Activated CD4-positive, alpha-beta T cell treated with anti-CD3 and anti-CD28 coated beads, Interleukin-2, amount 10 ng/mL, durations not matched to agents 24 days and 14 days (primary cell): ENCODE measurements at regions of chr16 and their contacts with region 1.

Region 1: DNA sequence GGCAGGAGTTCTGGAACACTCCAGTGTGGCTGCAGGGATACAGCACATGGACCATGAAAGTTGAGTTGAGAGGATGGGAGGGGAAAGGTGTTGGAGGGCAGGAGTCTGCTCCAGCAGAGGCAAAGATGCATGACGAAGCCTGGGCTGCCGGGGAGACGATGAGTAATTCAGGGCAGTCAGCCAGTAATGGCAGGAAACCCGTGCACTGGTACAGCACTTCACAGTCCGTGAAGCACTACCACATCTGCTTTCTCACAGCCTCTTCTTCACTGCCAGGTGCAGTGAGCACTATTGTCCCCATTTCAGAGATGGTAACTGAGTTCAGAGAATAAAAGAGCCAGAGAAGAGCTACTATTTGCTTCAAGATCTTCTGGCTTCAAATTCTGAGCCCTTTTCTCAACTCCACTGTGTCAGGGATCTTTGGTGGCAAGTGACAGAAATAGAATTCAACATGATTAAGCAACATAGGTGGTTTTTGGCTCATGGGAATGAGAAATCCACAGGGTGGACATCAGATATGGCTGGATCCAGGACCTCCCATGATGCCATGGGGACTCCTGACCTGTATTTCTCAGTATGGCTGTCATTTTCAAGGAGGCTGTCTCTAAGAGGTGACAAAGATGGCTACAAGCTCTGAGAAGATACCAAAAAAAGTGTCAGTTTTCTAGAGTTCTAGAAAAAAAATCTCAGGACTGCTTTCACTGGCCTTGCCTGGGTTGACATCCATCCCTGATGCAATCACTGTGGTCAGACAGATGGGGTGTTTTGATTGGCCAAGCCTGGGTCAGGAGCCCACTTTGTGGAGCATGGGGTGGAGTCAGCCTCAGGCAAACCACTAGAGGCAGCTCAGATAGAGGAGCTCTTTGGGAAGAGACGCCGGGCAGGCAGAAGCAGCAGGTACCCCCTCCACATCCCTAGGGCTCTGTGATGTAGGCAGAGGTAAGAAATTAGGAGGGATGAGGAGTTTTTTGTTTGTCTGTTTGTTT is 24.7 kb downstream of the IL21R start:
- DNase-seq: peak; percentile 90
- H3K4me3 Mint-ChIP-seq: peak overlapping the region; percentile 24
- H3K27ac Mint-ChIP-seq: peak overlapping the region; percentile 80
- H3K4me1 Mint-ChIP-seq: peaks cover 55% of the 10 kb centered on the region
- H3K27me3 Mint-ChIP-seq: no peaks in the 10 kb centered on the region

Region 2: GRCh38 chr16:27374804-27375425 is 51.8 kb before region 1 on chr16:
- intact Hi-C with region 1: no loop called
- DNase-seq: peak; percentile 77
- H3K4me3 Mint-ChIP-seq: no peak overlapping the region
- H3K27ac Mint-ChIP-seq: no peak overlapping the region
- H3K4me1 Mint-ChIP-seq: peaks cover 28% of the 10 kb centered on the region
- H3K27me3 Mint-ChIP-seq: no peaks in the 10 kb centered on the region

Region 3: GRCh38 chr16:27387724-27388123 is 39.0 kb before region 1 on chr16:
- intact Hi-C with region 1: no loop called
- DNase-seq: peak; percentile 58
- H3K4me3 Mint-ChIP-seq: no peak overlapping the region
- H3K27ac Mint-ChIP-seq: peak overlapping the region; percentile 76
- H3K4me1 Mint-ChIP-seq: peaks cover 14% of the 10 kb centered on the region
- H3K27me3 Mint-ChIP-seq: no peaks in the 10 kb centered on the region

Region 4: DNA sequence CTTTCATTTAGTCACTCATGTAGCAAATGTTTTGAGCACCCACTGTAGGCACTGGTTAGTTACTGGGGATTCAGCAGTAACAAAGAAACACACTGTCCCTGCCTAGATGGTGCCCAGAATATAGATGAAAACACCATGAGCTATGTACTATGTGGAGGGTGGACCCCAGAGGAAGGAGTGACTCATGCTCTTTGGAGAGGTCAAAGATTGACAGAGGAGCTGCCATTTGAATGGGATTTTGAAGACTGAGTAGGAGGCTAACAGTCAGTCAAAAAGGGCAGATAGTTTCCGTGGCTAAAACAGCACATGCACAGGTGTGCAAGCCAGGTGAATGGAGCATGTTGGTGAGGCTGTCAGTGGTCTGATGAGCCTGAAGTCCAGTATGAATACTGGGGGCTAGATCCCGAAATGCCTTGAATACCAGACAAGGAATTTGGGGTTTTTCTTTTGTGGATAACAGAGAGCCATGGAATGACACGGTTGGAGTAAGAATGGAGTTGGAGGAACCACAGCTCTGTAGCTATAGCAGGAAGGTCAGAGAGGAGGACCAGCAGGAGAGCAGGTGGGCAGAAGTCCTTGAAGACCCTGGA is 18.6 kb before region 1 on chr16:
- intact Hi-C with region 1: loop called (anchors 1 kb)
- DNase-seq: peak; percentile 79
- H3K4me3 Mint-ChIP-seq: peak overlapping the region; percentile 100
- H3K27ac Mint-ChIP-seq: peak overlapping the region; percentile 98
- H3K4me1 Mint-ChIP-seq: peaks cover 62% of the 10 kb centered on the region
- H3K27me3 Mint-ChIP-seq: no peaks in the 10 kb centered on the region

Region 5: DNA sequence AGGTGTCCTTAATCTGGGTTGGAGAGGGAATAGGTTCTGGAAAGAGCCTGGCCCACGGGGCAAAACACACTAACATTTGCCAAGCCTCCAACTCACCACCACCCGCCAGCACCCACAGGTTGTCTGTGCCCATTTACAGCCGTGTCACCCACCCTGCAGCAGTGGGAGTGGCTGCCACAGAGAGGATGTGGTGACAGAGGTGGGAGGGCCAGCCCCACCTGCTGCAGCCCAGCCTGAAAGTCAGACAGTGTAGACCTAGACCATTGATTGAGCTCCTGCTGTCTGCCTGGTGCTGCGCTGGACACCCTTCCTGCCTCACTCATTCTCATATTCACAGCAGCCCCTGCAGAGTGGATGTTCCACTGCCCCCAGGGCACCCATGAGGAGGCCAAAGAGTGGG is 20.0 kb after region 1 on chr16:
- intact Hi-C with region 1: loop called (anchors 2 kb)
- DNase-seq: peak; percentile 88
- H3K4me3 Mint-ChIP-seq: peak overlapping the region; percentile 45
- H3K27ac Mint-ChIP-seq: peak overlapping the region; percentile 78
- H3K4me1 Mint-ChIP-seq: peaks cover 46% of the 10 kb centered on the region
- H3K27me3 Mint-ChIP-seq: no peaks in the 10 kb centered on the region